Natural killer cell (primary cell): ENCODE measurements at regions of chr5 and their contacts with region 1.

Region 1: GRCh38 chr5:73591102-73591695 is 25.7 kb downstream of the UTP15 start:
- DNase-seq: peak in 1 of 2 donors; percentile 85
- ATAC-seq: peak; percentile 73 to 91 (median 89)
- H3K4me3 ChIP-seq: no peak overlapping the region
- H3K4me3 Mint-ChIP-seq: no peak overlapping the region
- H3K27ac ChIP-seq: no peak overlapping the region
- H3K27ac Mint-ChIP-seq: no peak overlapping the region
- H3K4me1 ChIP-seq: no peaks in the 10 kb centered on the region
- H3K4me1 Mint-ChIP-seq: no peaks in the 10 kb centered on the region
- H3K27me3 ChIP-seq: no peaks in the 10 kb centered on the region
- H3K27me3 Mint-ChIP-seq: no peaks in the 10 kb centered on the region
- CTCF ChIP-seq: peak; percentile 86

Region 2: DNA sequence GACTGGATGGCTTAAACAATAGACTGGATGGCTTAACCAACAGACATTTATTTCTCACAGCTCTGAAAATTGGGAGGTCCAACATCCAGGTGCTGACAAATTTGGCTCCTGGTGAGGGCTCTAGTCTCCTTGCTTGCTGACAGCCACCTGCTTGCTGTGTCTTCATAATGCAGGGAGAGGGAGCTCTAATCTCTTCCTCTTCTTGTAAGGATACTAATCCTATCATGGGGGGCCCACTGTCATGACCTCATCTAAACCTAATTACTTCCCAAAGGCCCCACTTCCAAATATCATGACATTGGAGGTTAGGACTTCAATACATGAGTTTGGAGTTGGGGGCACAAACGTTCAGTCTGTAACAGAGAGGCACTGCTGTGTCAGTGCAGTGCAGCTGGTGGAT is 169.0 kb before region 1 on chr5:
- intact Hi-C with region 1: no loop called
- DNase-seq: no peak
- ATAC-seq: no peak
- H3K4me3 ChIP-seq: no peak overlapping the region
- H3K4me3 Mint-ChIP-seq: no peak overlapping the region
- H3K27ac ChIP-seq: no peak overlapping the region
- H3K27ac Mint-ChIP-seq: no peak overlapping the region
- H3K4me1 ChIP-seq: no peaks in the 10 kb centered on the region
- H3K4me1 Mint-ChIP-seq: no peaks in the 10 kb centered on the region
- H3K27me3 ChIP-seq: peaks cover 36% of the 10 kb centered on the region
- H3K27me3 Mint-ChIP-seq: peaks cover 59 to 77% of the 10 kb centered on the region in 2 donors
- CTCF ChIP-seq: no peak

Region 3: GRCh38 chr5:73792687-73793320 is 201.6 kb after region 1 on chr5:
- intact Hi-C with region 1: loop called (anchors 1 kb)
- DNase-seq: peak; percentile 68 to 79
- ATAC-seq: peak; percentile 75 to 88 (median 85)
- H3K4me3 ChIP-seq: no peak overlapping the region
- H3K4me3 Mint-ChIP-seq: no peak overlapping the region
- H3K27ac ChIP-seq: no peak overlapping the region
- H3K27ac Mint-ChIP-seq: no peak overlapping the region
- H3K4me1 ChIP-seq: peaks cover 9% of the 10 kb centered on the region
- H3K4me1 Mint-ChIP-seq: peaks cover 11% of the 10 kb centered on the region in 2 donors
- H3K27me3 ChIP-seq: no peaks in the 10 kb centered on the region
- H3K27me3 Mint-ChIP-seq: no peaks in the 10 kb centered on the region
- CTCF ChIP-seq: peak; percentile 98